ENCODE measurements at regions of chrX and their contacts with region 1.

Region 1: DNA sequence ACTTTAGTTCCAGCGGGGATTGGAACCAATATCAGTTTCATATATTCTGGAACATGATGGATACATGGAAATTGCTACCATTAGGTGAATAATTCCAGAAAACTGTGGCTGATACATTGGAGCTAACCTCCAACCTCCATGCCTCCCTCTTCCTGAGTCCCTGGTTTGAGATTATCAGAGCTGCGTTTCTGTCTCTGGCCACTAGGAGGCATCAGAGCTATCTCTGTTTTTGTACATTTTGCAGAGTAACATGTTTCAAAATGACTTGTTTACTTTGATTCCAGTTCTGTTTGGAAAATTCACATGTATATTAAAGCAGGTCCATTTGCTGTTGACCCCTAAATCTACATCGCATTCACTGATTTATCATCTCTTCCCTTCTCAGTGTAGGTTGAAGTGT is 2.4 kb upstream of the RAB40AL start:
- DNase-seq: peak; percentile 18
- H3K4me3 ChIP-seq: no peak overlapping the region
- H3K27ac ChIP-seq: no peak overlapping the region
- H3K4me1 ChIP-seq: no peaks in the 10 kb centered on the region
- H3K27me3 ChIP-seq: no peaks in the 10 kb centered on the region
- CTCF ChIP-seq: peak; percentile 43 to 52
- POLR2A ChIP-seq: no peak

Region 2: DNA sequence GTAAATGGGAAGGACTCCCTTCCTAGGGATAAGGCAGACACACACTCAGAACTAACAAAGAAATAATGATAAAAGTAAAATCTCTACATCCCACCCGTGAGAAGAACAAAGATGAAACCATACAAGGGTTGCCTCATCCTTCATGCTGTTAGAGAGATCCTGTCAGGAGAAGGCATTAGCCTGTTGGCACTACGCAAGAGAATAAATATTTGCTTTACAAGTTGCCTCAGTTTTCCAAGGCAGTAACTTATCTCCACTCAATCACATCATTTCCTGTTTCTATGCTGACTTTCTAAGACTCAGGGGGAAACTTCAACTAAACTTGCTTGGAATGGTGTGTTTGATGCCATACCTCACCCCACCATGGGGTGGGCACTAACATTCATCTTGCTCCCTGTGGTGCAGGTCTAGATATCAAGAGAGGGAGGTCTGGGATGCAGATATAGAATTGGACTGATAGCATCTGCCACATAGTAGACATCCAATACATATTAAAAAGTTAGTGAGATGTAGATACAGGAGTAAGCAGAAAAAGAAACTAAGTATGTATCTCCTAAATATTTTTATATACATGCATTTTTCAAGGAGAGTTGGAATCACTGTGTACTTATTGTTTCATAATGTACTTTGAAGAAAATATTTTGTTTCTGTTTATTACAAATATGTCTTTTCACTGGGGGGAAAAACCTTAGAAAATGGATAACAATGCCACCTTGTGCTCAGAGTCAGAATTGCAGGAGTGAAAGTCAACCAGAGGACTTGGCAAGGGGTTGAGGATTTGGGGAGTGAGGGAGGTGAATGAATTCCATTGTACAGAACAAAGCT is 223.1 kb after region 1 on chrX:
- CTCF ChIA-PET with region 1: interaction called, 3 read pairs
- POLR2A ChIA-PET with region 1: no interaction called
- dilution Hi-C with region 1: no loop called
- intact Hi-C with region 1: loop called (anchors 1 kb)
- DNase-seq: peak; percentile 58
- H3K4me3 ChIP-seq: no peak overlapping the region
- H3K27ac ChIP-seq: no peak overlapping the region
- H3K4me1 ChIP-seq: peaks cover 2% of the 10 kb centered on the region
- H3K27me3 ChIP-seq: no peaks in the 10 kb centered on the region
- CTCF ChIP-seq: peak; percentile 33 to 34
- POLR2A ChIP-seq: no peak

Region 3: DNA sequence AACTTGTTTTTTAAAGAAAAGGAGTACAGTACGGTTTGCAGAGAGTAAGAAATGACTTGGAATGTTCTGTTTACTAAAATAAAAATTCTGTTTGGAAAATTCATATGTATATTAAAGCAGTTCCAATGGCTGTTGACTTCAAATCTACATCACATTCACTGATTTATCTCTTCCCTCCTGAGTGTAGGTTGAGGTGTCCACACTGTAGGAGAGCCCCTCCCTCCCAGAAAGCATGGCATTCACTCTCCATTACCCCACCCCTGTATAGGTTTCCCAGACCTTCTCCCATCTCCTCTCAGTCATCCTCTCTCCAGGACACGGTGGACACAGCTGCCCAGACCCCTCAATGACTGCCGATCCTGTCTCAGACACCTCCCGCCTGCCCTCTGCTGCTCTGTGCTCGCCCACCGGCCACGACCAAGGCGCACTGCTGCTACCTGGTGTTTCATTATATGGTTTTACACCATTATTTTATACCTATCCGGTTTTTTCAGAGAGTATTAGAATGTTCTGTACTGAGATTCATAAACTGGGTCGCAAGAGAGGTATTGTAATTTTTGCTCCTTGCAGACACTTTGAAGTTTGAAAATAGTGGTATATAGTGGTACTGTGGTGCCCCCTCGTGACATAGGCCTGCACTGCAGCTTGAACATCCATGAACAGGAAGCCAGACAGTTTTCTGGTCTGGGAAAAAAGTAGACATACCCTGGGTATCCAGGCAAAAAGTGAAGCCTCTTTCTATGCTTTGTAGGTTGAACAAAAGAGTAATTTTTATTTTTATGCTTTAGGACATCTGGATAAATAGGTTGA is 241.5 kb after region 1 on chrX:
- CTCF ChIA-PET with region 1: interaction called, 17 read pairs
- POLR2A ChIA-PET with region 1: no interaction called
- dilution Hi-C with region 1: no loop called
- intact Hi-C with region 1: no loop called
- DNase-seq: peak; percentile 62
- H3K4me3 ChIP-seq: no peak overlapping the region
- H3K27ac ChIP-seq: no peak overlapping the region
- H3K4me1 ChIP-seq: no peaks in the 10 kb centered on the region
- H3K27me3 ChIP-seq: no peaks in the 10 kb centered on the region
- CTCF ChIP-seq: peak; percentile 60 to 68
- POLR2A ChIP-seq: no peak